ENCODE measurements at regions of chr19 and their contacts with region 1.

Region 1: GRCh38 chr19:48993175-48994034 is at the starts of genes GYS1 and RUVBL2:
- DNase-seq: peak; percentile 98 to 100 (median 99)
- ATAC-seq: peak; percentile 92
- H3K4me3 ChIP-seq: peak within 1 kb of the TSS; percentile 84
- H3K4me3 Mint-ChIP-seq: peak within 1 kb of the TSS; percentile 92
- H3K27ac ChIP-seq: peak within 1 kb of the TSS; percentile 82 to 83
- H3K27ac Mint-ChIP-seq: peak within 1 kb of the TSS; percentile 90
- H3K4me1 ChIP-seq: peaks cover 43% of the 10 kb centered on the region
- H3K4me1 Mint-ChIP-seq: peaks cover 46% of the 10 kb centered on the region
- H3K27me3 ChIP-seq: no peaks in the 10 kb centered on the region
- H3K27me3 Mint-ChIP-seq: no peaks in the 10 kb centered on the region
- CTCF ChIP-seq: peak; percentile 97
- total RNA-seq, gene GYS1: 13.2 to 14.1 TPM
- total RNA-seq, gene RUVBL2: 10.7 to 12.3 TPM

Region 2: DNA sequence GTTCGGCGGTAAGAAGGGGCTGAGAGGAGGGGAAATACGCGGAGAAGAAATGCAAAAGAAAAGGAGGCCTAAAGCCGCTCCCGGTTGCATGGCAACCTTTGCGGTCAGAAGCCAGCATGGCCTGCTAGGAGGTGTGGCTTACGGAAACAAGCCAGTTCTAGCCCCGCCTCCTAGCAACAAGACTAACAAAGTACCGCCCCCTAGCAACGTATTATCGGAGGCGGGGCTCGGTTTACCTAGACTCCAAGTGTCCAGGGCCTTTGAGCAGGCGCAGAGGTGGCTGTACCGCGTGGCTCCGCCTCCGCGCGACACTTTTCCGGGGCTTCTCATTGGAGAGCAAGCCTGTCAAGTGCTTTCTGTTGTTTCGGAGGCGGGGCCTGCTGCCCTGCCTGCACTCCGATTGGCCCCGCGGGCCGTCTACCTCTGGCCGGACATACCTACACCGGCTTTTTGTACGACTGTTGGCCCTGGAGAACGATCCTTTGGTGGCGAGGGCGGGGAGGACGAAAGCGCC is 524.6 kb before region 1 on chr19:
- CTCF ChIA-PET with region 1: no interaction called
- POLR2A ChIA-PET with region 1: no interaction called
- intact Hi-C with region 1: loop called in 1 of 2 experiments (anchors 2 kb)
- DNase-seq: peak; percentile 98 to 100 (median 99)
- ATAC-seq: peak; percentile 89
- H3K4me3 ChIP-seq: peak overlapping the region; percentile 96
- H3K4me3 Mint-ChIP-seq: peak overlapping the region; percentile 90
- H3K27ac ChIP-seq: peak overlapping the region; percentile 25 to 79
- H3K27ac Mint-ChIP-seq: peak overlapping the region; percentile 82
- H3K4me1 ChIP-seq: peaks cover 22% of the 10 kb centered on the region
- H3K4me1 Mint-ChIP-seq: peaks cover 21% of the 10 kb centered on the region
- H3K27me3 ChIP-seq: no peaks in the 10 kb centered on the region
- H3K27me3 Mint-ChIP-seq: no peaks in the 10 kb centered on the region
- CTCF ChIP-seq: no peak

Region 3: DNA sequence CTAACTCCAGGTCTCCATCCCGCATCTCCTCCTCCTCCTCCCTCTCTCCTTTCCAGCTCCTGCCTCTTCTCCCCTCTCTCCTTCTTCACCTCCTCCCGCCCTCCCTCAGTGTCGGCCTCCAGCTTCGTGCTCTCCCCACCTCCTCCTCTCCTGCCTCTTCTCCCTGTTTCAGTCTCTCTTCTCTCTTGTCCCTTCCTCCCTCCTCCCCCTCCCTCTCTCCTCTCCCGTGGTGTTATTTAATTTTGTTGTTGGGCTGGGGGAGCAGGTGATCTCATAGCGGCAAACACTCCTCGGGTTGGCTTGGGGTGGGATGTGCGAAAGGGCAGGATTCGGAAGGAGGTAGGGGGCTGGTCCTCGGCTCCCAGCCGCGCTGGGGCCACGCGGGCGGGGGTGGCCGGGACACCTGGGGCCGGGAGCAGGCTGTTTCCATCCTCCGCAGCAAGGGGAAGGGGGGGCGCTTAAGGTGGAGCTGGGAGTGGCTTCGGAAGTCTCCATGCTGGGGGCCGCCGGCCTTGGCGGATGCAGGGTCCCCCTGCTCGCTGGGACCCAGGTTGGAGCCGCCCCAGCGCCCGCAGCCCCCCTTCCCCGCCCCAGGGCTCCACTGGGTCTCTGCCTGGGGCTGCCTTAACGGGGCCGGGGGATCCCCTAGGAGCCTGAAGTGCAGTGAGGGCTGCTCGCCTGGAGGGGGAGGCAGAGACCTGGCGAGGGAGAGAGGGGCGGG is 347.2 kb before region 1 on chr19 and contains the start of gene CA11:
- CTCF ChIA-PET with region 1: no interaction called
- POLR2A ChIA-PET with region 1: interaction called, 11 read pairs
- intact Hi-C with region 1: no loop called
- DNase-seq: peak; percentile 88 to 96 (median 92)
- ATAC-seq: peak; percentile 80
- H3K4me3 ChIP-seq: peak within 1 kb of the TSS; percentile 71
- H3K4me3 Mint-ChIP-seq: peak within 1 kb of the TSS; percentile 85
- H3K27ac ChIP-seq: peak within 1 kb of the TSS; percentile 78 to 96
- H3K27ac Mint-ChIP-seq: peak within 1 kb of the TSS; percentile 91
- H3K4me1 ChIP-seq: peaks cover 48% of the 10 kb centered on the region
- H3K4me1 Mint-ChIP-seq: peaks cover 54% of the 10 kb centered on the region
- H3K27me3 ChIP-seq: no peaks in the 10 kb centered on the region
- H3K27me3 Mint-ChIP-seq: no peaks in the 10 kb centered on the region
- CTCF ChIP-seq: peak; percentile 84
- total RNA-seq, gene CA11: 11.0 to 12.4 TPM

Region 4: GRCh38 chr19:48899781-48900476 is 93.5 kb before region 1 on chr19 and contains the start of gene NUCB1:
- CTCF ChIA-PET with region 1: interaction called, 13 read pairs
- POLR2A ChIA-PET with region 1: interaction called, 7 read pairs
- intact Hi-C with region 1: no loop called
- DNase-seq: peak; percentile 96 to 99 (median 99)
- ATAC-seq: peak; percentile 93
- H3K4me3 ChIP-seq: peak within 1 kb of the TSS; percentile 92
- H3K4me3 Mint-ChIP-seq: peak within 1 kb of the TSS; percentile 95
- H3K27ac ChIP-seq: peak within 1 kb of the TSS; percentile 65 to 72
- H3K27ac Mint-ChIP-seq: peak within 1 kb of the TSS; percentile 88
- H3K4me1 ChIP-seq: peaks cover 51% of the 10 kb centered on the region
- H3K4me1 Mint-ChIP-seq: peaks cover 37% of the 10 kb centered on the region
- H3K27me3 ChIP-seq: peaks cover 3 to 10% of the 10 kb centered on the region in 2 experiments
- H3K27me3 Mint-ChIP-seq: peaks cover 6% of the 10 kb centered on the region
- CTCF ChIP-seq: no peak
- total RNA-seq, gene NUCB1: 73.7 to 77.0 TPM

Region 5: DNA sequence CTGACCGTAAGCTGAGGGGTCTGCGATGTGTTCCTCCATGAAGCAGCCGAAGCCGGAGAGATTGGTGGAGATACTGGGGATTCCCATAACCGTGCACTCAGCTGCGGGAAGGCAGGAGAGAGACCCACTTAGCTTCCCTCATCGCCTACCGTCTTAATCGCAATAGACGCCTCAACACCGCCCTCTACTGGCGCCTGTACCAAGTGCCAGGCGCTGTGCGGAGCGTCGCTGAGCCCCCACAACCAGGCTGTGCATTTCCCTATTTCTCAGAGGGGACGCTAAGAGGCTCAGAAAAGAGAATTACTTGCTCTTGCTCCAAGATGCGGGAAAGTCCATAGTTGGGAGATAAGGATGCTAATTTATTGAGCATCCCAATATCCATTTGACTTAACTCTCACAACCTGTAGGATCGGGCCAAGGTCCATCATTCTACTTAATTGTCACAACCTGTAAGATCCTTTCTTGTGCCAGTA is 22.4 kb before region 1 on chr19:
- CTCF ChIA-PET with region 1: interaction called, 15 read pairs
- POLR2A ChIA-PET with region 1: interaction called, 41 read pairs
- intact Hi-C with region 1: no loop called
- DNase-seq: peak; percentile 68 to 92 (median 79)
- ATAC-seq: peak; percentile 95
- H3K4me3 ChIP-seq: no peak overlapping the region
- H3K4me3 Mint-ChIP-seq: peak overlapping the region; percentile 21
- H3K27ac ChIP-seq: no peak overlapping the region
- H3K27ac Mint-ChIP-seq: peak overlapping the region; percentile 16
- H3K4me1 ChIP-seq: peaks cover 18% of the 10 kb centered on the region
- H3K4me1 Mint-ChIP-seq: peaks cover 12% of the 10 kb centered on the region
- H3K27me3 ChIP-seq: no peaks in the 10 kb centered on the region
- H3K27me3 Mint-ChIP-seq: no peaks in the 10 kb centered on the region
- CTCF ChIP-seq: peak; percentile 95

Region 6: DNA sequence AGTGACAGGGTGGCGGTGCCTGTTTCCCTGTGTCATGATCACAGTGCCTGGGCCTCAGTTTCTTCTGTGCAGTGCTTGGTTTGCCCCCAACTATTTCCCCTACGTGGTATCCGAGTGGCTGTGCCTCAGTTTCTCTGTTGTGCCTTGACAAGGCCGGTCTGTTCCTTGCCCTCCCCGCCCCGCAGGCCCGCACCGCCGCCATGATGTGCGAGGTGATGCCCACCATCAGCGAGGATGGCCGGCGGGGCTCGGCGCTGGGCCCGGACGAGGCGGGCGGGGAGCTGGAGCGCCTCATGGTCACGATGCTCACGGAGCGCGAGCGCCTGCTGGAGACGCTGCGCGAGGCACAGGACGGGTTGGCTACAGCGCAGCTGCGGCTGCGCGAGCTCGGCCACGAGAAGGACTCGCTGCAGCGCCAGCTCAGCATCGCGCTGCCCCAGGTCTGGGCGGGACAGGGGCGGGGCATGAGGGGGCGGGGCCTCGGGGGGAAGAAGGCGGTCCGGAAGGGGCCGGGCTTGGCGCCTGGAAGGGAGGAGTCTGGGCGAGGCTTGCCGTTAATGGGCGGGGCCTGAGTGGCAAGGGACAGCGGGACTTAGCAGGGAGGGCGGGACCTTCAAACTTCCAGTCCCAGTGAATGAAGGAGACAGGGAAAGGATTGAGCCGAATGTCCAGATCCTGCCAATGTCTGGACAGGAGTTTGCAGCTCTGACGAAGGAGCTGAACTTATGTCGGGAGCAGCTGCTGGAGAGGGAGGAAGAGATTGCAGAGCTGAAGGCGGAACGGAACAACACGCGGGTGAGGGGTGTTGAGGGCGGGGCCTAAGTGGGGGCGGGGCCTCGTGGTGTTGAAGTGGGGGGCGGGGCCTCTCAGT is 134.5 kb after region 1 on chr19:
- CTCF ChIA-PET with region 1: no interaction called
- POLR2A ChIA-PET with region 1: interaction called, 6 read pairs
- intact Hi-C with region 1: loop called in 1 of 2 experiments (anchors 5 kb)
- DNase-seq: peak; percentile 90 to 98 (median 94)
- ATAC-seq: peak; percentile 93
- H3K4me3 ChIP-seq: peak overlapping the region; percentile 47
- H3K4me3 Mint-ChIP-seq: peak overlapping the region; percentile 73
- H3K27ac ChIP-seq: no peak overlapping the region
- H3K27ac Mint-ChIP-seq: peak overlapping the region; percentile 50
- H3K4me1 ChIP-seq: peaks cover 15% of the 10 kb centered on the region
- H3K4me1 Mint-ChIP-seq: peaks cover 24% of the 10 kb centered on the region
- H3K27me3 ChIP-seq: no peaks in the 10 kb centered on the region
- H3K27me3 Mint-ChIP-seq: no peaks in the 10 kb centered on the region
- CTCF ChIP-seq: no peak